ENCODE measurements at regions of chr6 and their contacts with region 1.

Region 1: DNA sequence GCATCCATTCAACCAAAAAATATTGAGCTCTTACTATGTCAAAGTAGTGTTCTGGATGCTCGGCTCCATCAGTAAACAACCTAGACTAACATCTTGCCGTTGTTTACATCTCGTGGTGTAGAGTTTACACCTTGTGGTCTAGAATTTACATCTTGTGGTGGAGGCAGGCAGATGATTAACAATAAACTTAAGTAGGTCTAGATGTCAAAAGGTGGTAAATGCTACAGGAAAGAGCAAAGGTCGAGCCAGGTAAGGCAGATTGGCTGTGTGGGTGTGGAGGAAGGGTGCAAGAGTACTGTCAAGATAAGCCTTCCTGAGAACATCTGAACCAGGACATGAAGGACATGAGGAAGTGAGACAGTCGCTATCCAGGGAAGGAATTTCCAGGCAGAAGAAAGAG is 88.4 kb upstream of the ESR1 start:
- DNase-seq: no peak

Region 2: DNA sequence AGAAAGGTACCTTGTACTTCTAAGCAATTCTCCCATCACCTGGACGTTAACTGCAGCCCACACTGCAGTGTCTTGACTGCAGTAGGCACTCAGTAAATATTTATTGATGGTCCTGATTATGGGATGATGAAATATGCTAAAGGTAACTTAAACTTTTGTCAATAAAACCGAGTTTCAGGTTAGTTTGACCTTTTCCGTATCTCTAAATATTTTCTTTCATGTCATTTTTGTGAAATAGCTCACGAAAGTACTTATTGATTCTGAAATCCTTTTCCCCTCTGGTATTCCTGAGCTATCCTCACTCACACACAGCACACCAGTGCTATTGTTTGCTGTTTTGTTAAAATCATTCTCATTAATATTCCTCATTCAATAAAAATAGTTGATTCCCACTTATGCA is 61.0 kb before region 1 on chr6:
- intact Hi-C with region 1: loop called in 1 of 2 experiments (anchors 2 kb)
- DNase-seq: no peak

Measured in posterior vena cava (tissue), 2 donors.